ENCODE measurements at regions of chr18 and their contacts with region 1.

Region 1: GRCh38 chr18:32289483-32290075 is 99.7 kb downstream of the MEP1B start:
- DNase-seq: peak; percentile 60
- H3K4me3 ChIP-seq: no peak overlapping the region
- CTCF ChIP-seq: peak; percentile 80

Region 2: DNA sequence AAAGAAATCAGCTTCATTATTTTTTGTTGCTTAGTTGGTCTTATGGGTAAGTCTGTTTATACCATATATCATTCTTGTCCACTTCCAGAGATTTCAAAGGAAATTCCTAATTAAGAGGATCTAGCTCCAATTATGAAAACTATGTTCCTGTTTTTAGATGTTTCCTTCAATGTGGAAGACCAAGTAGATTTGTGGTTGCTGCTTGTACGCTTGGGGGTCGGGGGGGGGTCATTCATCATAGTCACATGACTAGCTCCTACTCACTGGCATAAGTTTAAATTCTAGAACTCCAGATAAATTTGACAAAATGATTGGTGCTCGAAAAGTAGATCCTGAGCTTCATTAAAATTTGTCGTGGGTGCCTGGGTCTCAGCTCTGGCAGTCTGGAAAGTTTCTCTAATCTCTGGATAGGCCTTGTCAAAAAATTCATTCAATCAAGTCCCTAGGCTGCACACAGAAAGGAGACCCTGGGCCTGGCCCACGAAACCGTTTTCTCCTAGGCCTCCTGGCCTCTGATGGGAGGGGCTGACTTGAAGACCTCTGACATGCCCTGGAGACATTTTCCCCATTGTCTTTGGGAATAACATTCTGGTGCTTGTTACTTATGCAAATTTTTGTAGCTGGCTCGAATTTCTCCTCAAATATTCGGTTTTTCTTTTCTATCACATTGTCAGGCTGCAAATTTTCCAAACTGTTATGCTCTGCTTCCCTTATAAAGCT is 37.3 kb before region 1 on chr18:
- in situ Hi-C with region 1: no loop called
- DNase-seq: no peak
- H3K4me3 ChIP-seq: no peak overlapping the region
- CTCF ChIP-seq: no peak

Region 3: GRCh38 chr18:32470713-32471633 is 181.4 kb after region 1 on chr18 and contains the start of gene GAREM1:
- in situ Hi-C with region 1: loop called (anchors 25 kb)
- DNase-seq: peak; percentile 97
- H3K4me3 ChIP-seq: peak within 1 kb of the TSS; percentile 67
- CTCF ChIP-seq: peak; percentile 59